ENCODE measurements at regions of chr3 and their contacts with region 1.

Region 1: GRCh38 chr3:33074217-33075067 is 22.5 kb downstream of the GLB1 start:
- DNase-seq: peak; percentile 79
- H3K4me3 ChIP-seq: no peak overlapping the region; a peak in 1 of 4 replicates
- H3K27ac ChIP-seq: no peak overlapping the region
- H3K4me1 ChIP-seq: peaks cover 0 to 21% of the 10 kb centered on the region in 2 experiments; a peak in 2 of 4 replicates
- H3K27me3 ChIP-seq: no peaks in the 10 kb centered on the region
- CTCF ChIP-seq: peak; percentile 96
- EP300 ChIP-seq: no peak
- RAD21 ChIP-seq: peak; percentile 84

Region 2: GRCh38 chr3:32733631-32734229 is 340.7 kb before region 1 on chr3:
- CTCF ChIA-PET with region 1: interaction called, 10 read pairs
- POLR2A ChIA-PET with region 1: no interaction called
- DNase-seq: peak; percentile 56
- H3K4me3 ChIP-seq: no peak overlapping the region; a peak in 1 of 4 replicates
- H3K27ac ChIP-seq: no peak overlapping the region
- H3K4me1 ChIP-seq: no peaks in the 10 kb centered on the region
- H3K27me3 ChIP-seq: no peaks in the 10 kb centered on the region
- CTCF ChIP-seq: peak; percentile 77
- EP300 ChIP-seq: no peak
- RAD21 ChIP-seq: peak; percentile 70

Region 3: GRCh38 chr3:32947789-32948238 is 126.6 kb before region 1 on chr3:
- CTCF ChIA-PET with region 1: interaction called, 72 read pairs
- POLR2A ChIA-PET with region 1: interaction called, 3 read pairs
- DNase-seq: peak; percentile 58
- H3K4me3 ChIP-seq: no peak overlapping the region; a peak in 1 of 4 replicates
- H3K27ac ChIP-seq: no peak overlapping the region
- H3K4me1 ChIP-seq: no peaks in the 10 kb centered on the region
- H3K27me3 ChIP-seq: no peaks in the 10 kb centered on the region
- CTCF ChIP-seq: peak; percentile 78
- EP300 ChIP-seq: no peak
- RAD21 ChIP-seq: peak; percentile 89

Region 4: DNA sequence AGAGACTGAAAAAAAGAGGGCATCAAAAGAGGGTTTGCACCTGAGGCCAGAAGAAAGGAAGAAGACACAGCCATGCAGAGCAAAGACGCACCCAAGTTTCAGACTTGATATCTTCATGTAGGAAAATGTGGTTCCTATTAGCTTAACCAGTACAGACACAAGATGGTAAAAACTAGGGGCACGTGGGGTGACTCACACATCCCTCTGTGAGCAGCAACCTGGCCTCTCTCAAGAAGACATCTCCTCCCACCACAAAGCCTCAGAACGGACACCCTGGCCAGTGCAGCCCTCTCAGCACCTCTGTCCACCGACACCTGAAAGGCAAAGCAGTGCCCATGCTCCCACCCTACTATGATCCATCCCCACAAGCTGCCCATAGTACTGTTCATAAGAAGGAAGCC is 10.8 kb before region 1 on chr3:
- CTCF ChIA-PET with region 1: interaction called, 27 read pairs
- POLR2A ChIA-PET with region 1: no interaction called
- DNase-seq: no peak
- H3K4me3 ChIP-seq: no peak overlapping the region
- H3K27ac ChIP-seq: no peak overlapping the region
- H3K4me1 ChIP-seq: peaks cover 4 to 6% of the 10 kb centered on the region in 2 experiments; a peak in 1 of 4 replicates
- H3K27me3 ChIP-seq: no peaks in the 10 kb centered on the region
- CTCF ChIP-seq: no peak
- EP300 ChIP-seq: peak in 1 of 2 experiments; percentile 33; a peak in 1 of 4 replicates
- RAD21 ChIP-seq: no peak

Region 5: GRCh38 chr3:33096093-33096868 is 21.8 kb after region 1 on chr3:
- CTCF ChIA-PET with region 1: interaction called, 32 read pairs
- POLR2A ChIA-PET with region 1: no interaction called
- DNase-seq: peak; percentile 67
- H3K4me3 ChIP-seq: peak overlapping the region; percentile 77 to 80
- H3K27ac ChIP-seq: peak overlapping the region; percentile 69 to 75
- H3K4me1 ChIP-seq: peaks cover 0 to 8% of the 10 kb centered on the region in 2 experiments; a peak in 1 of 4 replicates
- H3K27me3 ChIP-seq: no peaks in the 10 kb centered on the region
- CTCF ChIP-seq: no peak
- EP300 ChIP-seq: no peak
- RAD21 ChIP-seq: no peak

Measured in SK-N-SH (cell line).